ENCODE measurements at regions of chr3 and their contacts with region 1.

Region 1: DNA sequence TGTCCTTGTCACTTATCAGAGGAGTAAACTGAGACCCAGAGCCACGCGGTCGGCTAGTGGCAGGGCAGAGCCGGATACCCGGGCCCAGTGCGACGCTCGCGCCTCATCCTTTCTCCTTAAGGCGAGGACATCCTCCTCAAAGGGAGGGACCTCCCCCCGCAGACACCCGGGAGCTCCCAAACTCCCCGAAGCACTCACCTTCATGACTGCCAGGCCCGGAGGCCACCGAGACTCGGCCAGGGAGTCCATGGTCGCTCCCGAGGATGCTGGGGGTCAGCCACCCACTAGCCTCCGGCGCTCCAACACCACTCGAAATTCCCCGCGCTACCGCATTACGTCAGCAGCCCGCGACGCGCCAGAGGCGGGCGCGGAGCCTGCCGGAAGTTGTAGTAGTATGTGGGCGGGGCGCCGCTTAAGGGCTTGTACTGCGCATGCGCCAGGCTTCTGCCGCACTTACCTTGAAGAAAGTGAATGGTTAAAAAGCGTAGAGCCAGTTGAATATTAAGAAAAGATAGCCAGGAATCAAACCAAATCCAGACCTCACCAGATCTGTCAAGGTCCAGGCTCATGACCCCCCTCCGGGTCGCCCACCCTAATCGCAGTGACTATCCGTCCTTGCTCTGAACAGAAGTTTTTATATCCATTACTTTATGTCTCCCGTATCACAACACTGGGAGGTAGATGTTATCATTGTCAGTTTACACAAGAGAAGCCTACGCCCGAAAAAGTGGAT is at the start of gene RAD18:
- ATAC-seq: peak; percentile 67 to 94 (median 92)
- H3K4me3 ChIP-seq: peak within 1 kb of the TSS; percentile 71 to 86 (median 77)
- H3K27ac ChIP-seq: peak within 1 kb of the TSS in 1 of 2 donors; percentile 44
- H3K4me1 ChIP-seq: peaks cover 19 to 22% of the 10 kb centered on the region in 2 donors
- total RNA-seq, gene RAD18: 3.7 to 21.6 (median 7.0) TPM

Region 2: GRCh38 chr3:8663177-8664061 is 299.9 kb before region 1 on chr3:
- in situ Hi-C with region 1: loop called in 1 of 9 experiments (anchors 25 kb)
- ATAC-seq: peak; percentile 47 to 93 (median 62)
- H3K4me3 ChIP-seq: no peak overlapping the region
- H3K27ac ChIP-seq: no peak overlapping the region
- H3K4me1 ChIP-seq: peaks cover 5 to 39% of the 10 kb centered on the region in 2 donors

Region 3: GRCh38 chr3:9088441-9089353 is 125.4 kb after region 1 on chr3:
- in situ Hi-C with region 1: no loop called
- ATAC-seq: peak in 6 of 8 experiments; percentile 11 to 75 (median 28)
- H3K4me3 ChIP-seq: no peak overlapping the region
- H3K27ac ChIP-seq: no peak overlapping the region
- H3K4me1 ChIP-seq: peaks cover 3 to 8% of the 10 kb centered on the region in 2 donors